CD14-positive monocyte (primary cell): ENCODE measurements at regions of chr11 and their contacts with region 1.

Region 1: DNA sequence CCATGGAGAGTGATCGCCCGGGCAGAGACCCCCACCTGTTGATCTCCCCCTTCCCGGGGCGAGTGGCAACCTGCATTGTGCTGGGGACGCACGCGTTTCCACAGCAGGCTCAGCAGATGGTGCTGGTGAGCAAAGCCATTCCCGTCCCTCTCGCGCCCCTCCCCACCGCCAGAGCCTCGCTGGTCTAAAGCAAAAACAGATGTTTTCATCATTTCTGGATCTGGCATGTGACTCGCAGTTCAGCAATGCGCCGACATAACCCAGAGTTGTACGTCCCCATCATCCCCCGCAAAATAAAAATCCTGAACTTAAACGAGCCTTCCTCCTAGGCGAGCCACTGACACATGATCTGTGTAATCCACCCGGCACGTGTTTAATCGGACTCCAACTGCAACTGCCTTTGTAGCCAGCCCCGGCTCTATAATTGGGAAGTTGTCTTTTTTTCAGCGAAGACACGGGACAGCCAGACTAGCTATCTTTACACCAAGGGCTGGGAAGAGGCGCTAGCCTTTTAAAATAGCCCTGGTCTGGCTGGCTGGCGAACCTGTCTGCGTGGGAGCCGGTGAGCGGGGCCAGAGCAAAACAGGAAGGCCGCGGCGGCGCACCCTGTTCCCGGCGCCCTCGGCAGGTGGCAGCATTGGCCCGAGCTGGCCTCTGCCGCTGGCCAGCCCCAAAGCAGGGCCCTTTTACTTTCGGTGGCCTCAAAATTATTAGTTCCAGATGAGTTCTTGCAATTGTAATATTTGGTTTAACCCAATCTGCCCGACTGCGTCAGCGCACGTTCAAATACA is 203.0 kb upstream of the SORL1-AS1 start:
- DNase-seq: peak; percentile 48 to 66 (median 57)
- H3K4me3 ChIP-seq: peak overlapping the region; percentile 43 to 75 (median 49)
- H3K4me3 Mint-ChIP-seq: peak overlapping the region; percentile 86 to 89
- H3K27ac ChIP-seq: no peak overlapping the region
- H3K27ac Mint-ChIP-seq: peak overlapping the region; percentile 7 to 58 (median 38)
- H3K4me1 ChIP-seq: peaks cover 12 to 14% of the 10 kb centered on the region in 2 donors
- H3K4me1 Mint-ChIP-seq: peaks cover 13% of the 10 kb centered on the region
- H3K27me3 ChIP-seq: peaks cover 0 to 4% of the 10 kb centered on the region in 2 donors
- H3K27me3 Mint-ChIP-seq: peaks cover 0 to 13% (median 8%) of the 10 kb centered on the region in 3 donors
- CTCF ChIP-seq: peak; percentile 89

Region 2: GRCh38 chr11:121625777-121626506 is 29.8 kb before region 1 on chr11:
- intact Hi-C with region 1: no loop called
- DNase-seq: no peak
- H3K4me3 ChIP-seq: no peak overlapping the region
- H3K4me3 Mint-ChIP-seq: no peak overlapping the region
- H3K27ac ChIP-seq: peak overlapping the region in 1 of 2 donors; percentile 40
- H3K27ac Mint-ChIP-seq: peak overlapping the region in 1 of 7 donors; percentile 27
- H3K4me1 ChIP-seq: no peaks in the 10 kb centered on the region
- H3K4me1 Mint-ChIP-seq: no peaks in the 10 kb centered on the region
- H3K27me3 ChIP-seq: no peaks in the 10 kb centered on the region
- H3K27me3 Mint-ChIP-seq: peaks cover 0 to 1% (median 0%) of the 10 kb centered on the region in 3 donors
- CTCF ChIP-seq: no peak

Region 3: DNA sequence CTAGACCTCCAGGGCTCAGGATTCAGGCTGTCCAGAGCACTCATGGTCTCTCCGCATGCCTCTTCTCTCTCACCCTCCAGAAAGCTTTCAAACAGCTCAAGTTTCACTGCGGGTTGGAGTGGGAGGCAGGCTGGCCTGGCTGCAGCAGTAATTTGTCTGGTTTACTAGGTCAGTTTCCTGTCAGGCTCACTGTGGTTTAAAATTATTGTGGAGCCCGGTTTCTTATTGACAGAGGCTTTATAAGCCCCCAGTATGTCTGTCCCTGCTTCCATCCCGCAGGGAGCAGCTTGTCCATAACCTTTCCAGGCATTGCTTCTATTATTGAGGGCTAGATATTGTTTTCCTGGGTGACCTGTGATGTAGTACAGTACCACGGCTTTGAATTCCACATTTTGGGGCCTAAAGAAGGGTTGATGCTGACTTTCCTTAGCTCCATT is 32.3 kb after region 1 on chr11:
- intact Hi-C with region 1: no loop called
- DNase-seq: no peak
- H3K4me3 ChIP-seq: no peak overlapping the region
- H3K4me3 Mint-ChIP-seq: no peak overlapping the region
- H3K27ac ChIP-seq: no peak overlapping the region
- H3K27ac Mint-ChIP-seq: no peak overlapping the region
- H3K4me1 ChIP-seq: peaks cover 0 to 6% of the 10 kb centered on the region in 2 donors
- H3K4me1 Mint-ChIP-seq: no peaks in the 10 kb centered on the region
- H3K27me3 ChIP-seq: no peaks in the 10 kb centered on the region
- H3K27me3 Mint-ChIP-seq: peaks cover 3 to 10% (median 3%) of the 10 kb centered on the region in 3 donors
- CTCF ChIP-seq: no peak

Region 4: GRCh38 chr11:122108192-122108799 is 452.6 kb after region 1 on chr11:
- intact Hi-C with region 1: loop called in 1 of 2 experiments (anchors 10 kb)
- DNase-seq: peak in 2 of 3 donors; percentile 11 to 36
- H3K4me3 ChIP-seq: no peak overlapping the region
- H3K4me3 Mint-ChIP-seq: no peak overlapping the region
- H3K27ac ChIP-seq: no peak overlapping the region
- H3K27ac Mint-ChIP-seq: no peak overlapping the region
- H3K4me1 ChIP-seq: no peaks in the 10 kb centered on the region
- H3K4me1 Mint-ChIP-seq: peaks cover 4% of the 10 kb centered on the region
- H3K27me3 ChIP-seq: peaks cover 0 to 14% of the 10 kb centered on the region in 2 donors
- H3K27me3 Mint-ChIP-seq: peaks cover 4 to 14% (median 12%) of the 10 kb centered on the region in 3 donors
- CTCF ChIP-seq: peak; percentile 37

Region 5: DNA sequence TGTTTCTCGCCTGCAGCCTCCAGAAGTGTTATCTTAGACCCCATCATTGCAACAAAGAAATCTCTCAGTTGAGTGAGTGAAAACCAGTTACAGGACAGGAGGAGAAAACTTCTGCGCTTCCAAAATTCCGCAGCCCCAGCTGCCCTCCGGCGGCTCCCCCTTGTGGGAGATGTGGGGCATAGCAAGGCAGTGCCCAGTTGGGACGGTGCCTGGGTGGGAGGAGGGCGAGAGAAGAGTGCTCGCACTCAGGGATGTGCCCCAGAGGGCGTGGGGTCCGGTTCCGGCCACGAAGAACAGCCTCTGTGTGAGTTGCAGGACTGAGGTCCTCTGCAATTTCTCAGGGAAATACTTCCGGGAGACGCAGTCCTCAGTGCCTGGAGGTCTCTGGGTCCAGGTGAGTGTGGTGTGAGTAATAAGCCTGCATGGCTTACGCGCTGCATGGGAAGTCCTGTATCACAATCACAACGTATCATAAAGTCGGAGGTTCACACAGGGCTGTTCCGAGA is 547.3 kb after region 1 on chr11:
- intact Hi-C with region 1: loop called (anchors 1 to 2 kb)
- DNase-seq: peak; percentile 19 to 42 (median 38)
- H3K4me3 ChIP-seq: no peak overlapping the region
- H3K4me3 Mint-ChIP-seq: peak overlapping the region in 1 of 2 donors; percentile 27
- H3K27ac ChIP-seq: no peak overlapping the region
- H3K27ac Mint-ChIP-seq: no peak overlapping the region
- H3K4me1 ChIP-seq: peaks cover 0 to 5% of the 10 kb centered on the region in 2 donors
- H3K4me1 Mint-ChIP-seq: peaks cover 13% of the 10 kb centered on the region
- H3K27me3 ChIP-seq: peaks cover 0 to 5% of the 10 kb centered on the region in 2 donors
- H3K27me3 Mint-ChIP-seq: peaks cover 11 to 18% (median 15%) of the 10 kb centered on the region in 3 donors
- CTCF ChIP-seq: peak; percentile 96

Region 6: GRCh38 chr11:122505304-122506006 is 849.7 kb after region 1 on chr11:
- intact Hi-C with region 1: loop called (anchors 5 kb)
- DNase-seq: peak; percentile 45 to 69 (median 50)
- H3K4me3 ChIP-seq: no peak overlapping the region
- H3K4me3 Mint-ChIP-seq: no peak overlapping the region
- H3K27ac ChIP-seq: no peak overlapping the region
- H3K27ac Mint-ChIP-seq: no peak overlapping the region
- H3K4me1 ChIP-seq: no peaks in the 10 kb centered on the region
- H3K4me1 Mint-ChIP-seq: peaks cover 6% of the 10 kb centered on the region
- H3K27me3 ChIP-seq: no peaks in the 10 kb centered on the region
- H3K27me3 Mint-ChIP-seq: peaks cover 0 to 3% (median 2%) of the 10 kb centered on the region in 3 donors
- CTCF ChIP-seq: peak; percentile 84